ENCODE measurements at regions of chr7 and their contacts with region 1.

Region 1: GRCh38 chr7:141659501-141659900 is 42.5 kb downstream of the DENND11 start:
- DNase-seq: no peak
- H3K4me3 ChIP-seq: no peak overlapping the region
- CTCF ChIP-seq: no peak

Region 2: DNA sequence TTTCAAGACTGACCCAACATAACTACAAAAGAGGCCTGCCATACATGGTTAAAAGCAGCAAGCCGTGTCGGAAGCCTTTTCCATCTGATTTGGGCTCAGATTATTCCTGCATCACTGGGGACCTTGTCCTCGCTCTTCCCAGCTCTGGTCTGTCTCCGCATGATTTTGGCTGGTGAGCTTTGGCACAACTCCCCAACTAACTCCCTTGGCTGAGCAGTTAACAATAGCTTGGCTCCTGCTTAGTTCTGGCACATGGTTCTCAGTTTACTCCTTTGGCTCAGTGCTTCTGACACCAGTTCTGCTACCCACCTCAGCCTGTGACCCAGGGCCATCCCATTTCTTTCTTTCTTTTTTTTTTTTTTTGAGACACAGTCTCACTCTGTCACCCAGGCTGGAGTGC is 91.3 kb before region 1 on chr7:
- in situ Hi-C with region 1: no loop called
- DNase-seq: no peak
- H3K4me3 ChIP-seq: no peak overlapping the region
- CTCF ChIP-seq: no peak

Region 3: DNA sequence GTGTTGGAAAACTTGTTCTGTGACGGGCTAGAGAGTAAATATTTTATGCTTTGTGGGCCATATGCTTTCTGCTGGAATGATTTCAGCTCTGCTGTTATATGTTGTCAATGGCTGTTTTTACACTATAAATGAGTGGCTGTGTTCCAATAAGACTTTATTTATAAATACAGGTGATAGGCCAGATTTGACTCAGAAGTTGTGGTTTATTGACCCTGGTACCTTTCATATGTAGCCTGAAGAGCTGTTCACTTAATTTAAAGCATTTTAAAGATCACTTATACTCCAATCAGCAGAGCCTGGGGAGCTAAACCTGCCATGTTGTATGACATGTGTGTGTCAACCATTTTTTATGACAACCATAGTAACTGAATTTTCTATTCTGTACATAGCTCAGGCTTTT is 69.5 kb after region 1 on chr7:
- in situ Hi-C with region 1: loop called (anchors 5 kb)
- DNase-seq: no peak
- H3K4me3 ChIP-seq: no peak overlapping the region
- CTCF ChIP-seq: no peak